Sciatic nerve (tissue), 2 donors: ENCODE measurements at regions of chr15 and their contacts with region 1.

Region 1: GRCh38 chr15:66851226-66852071 is 149.4 kb downstream of the SMAD6 start:
- DNase-seq: peak; percentile 91
- ATAC-seq: peak; percentile 94

Region 2: DNA sequence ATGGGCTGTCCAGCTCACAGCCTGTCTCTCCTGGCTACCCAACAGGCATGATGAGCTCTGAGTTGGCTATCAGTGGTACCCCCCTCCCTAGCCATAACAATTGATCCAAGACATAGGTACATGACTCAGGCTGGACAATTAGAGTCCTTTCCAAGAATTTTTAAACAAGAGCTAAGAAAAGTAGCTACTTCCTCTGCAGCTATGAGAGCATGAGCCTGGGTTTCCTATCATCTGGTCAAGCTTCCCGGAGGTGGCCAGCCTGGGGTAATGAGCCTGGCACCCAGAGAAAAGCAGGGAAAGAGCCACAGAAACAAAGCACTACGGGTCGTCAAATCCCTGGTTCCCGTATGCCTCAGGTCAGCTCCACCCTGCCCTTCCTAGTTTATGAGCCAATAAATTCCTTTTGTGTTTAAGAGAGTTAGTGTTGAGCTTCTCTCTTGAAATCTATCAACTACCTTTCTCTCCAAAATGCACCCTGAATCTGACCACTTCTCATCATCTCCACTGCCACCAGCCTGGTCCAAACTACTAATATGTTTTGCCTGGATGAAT is 1808.6 kb before region 1 on chr15:
- intact Hi-C with region 1: no loop called
- DNase-seq: no peak
- ATAC-seq: no peak

Region 3: GRCh38 chr15:66603301-66604179 is 247.9 kb before region 1 on chr15:
- intact Hi-C with region 1: loop called (anchors 5 kb)
- DNase-seq: peak; percentile 76
- ATAC-seq: peak; percentile 81

Region 4: GRCh38 chr15:66619151-66619903 is 232.1 kb before region 1 on chr15:
- intact Hi-C with region 1: loop called (anchors 5 kb)
- DNase-seq: peak; percentile 87
- ATAC-seq: peak; percentile 84

Region 5: DNA sequence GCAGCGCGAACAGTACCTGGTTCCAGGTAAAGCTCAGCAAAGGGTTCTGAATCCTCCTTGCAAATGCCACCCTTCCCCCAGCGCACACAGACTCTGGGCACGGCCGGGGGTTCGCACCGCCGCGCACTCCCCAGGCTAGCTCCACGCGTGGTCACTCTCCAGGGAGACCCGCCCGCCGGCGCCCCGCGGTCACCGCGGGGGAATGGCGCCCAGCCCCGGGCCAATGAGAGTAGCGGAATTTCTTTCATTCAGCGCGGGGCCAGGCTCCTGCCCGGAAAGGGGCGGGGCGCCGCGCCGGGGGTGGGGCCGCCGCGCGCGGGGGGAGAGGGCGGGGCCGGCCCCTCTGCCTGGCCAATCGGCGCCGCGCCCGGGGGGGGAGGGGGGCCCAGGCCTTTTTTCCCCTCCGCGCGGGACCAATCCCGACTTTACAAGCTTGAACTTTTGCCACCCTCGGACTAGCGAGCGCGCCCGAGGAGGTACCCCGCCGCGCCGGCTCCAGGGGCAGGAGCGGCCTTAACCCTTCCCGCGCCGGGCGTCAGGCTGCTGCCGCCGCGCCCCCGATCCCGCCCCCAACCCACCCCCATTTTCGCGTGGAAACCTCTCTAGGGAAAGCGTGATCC is 150.5 kb before region 1 on chr15:
- intact Hi-C with region 1: loop called (anchors 2 kb)
- DNase-seq: peak; percentile 97
- ATAC-seq: peak; percentile 88

Region 6: DNA sequence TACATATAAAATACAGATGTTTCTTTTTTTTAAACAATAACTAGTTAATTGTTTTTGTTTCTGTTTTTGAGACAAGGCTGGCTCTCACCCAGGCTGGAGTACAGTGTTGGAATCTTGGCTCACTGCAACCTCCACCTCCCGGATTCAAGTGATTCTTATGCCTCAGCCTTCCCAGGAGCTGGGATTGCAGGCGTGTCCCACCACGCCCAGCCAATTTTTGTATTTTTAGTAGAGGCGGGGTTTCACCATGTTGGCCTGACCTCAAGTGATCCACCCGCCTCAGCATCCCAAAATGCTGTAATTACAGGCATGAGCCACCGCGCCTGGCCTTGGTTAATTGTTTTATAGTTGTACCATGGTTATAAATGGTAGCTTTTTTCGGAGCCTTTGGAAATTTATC is 1274.9 kb after region 1 on chr15:
- intact Hi-C with region 1: no loop called
- DNase-seq: no peak
- ATAC-seq: peak; percentile 52